Activated T-helper 1 cell treated with anti-CD3 and anti-CD28 coated beads, Interleukin-12 subunit alpha, Interleukin-12 subunit beta, Interleukin-2, Interleukin-4 antibody, amounts not matched to agents 30 ng/mL and 10 ng/mL and 1 ng/mL, durations not matched to agents 14 hours and 24 hours and 36 hours (primary cell): ENCODE measurements at regions of chr12 and their contacts with region 1.

Region 1: DNA sequence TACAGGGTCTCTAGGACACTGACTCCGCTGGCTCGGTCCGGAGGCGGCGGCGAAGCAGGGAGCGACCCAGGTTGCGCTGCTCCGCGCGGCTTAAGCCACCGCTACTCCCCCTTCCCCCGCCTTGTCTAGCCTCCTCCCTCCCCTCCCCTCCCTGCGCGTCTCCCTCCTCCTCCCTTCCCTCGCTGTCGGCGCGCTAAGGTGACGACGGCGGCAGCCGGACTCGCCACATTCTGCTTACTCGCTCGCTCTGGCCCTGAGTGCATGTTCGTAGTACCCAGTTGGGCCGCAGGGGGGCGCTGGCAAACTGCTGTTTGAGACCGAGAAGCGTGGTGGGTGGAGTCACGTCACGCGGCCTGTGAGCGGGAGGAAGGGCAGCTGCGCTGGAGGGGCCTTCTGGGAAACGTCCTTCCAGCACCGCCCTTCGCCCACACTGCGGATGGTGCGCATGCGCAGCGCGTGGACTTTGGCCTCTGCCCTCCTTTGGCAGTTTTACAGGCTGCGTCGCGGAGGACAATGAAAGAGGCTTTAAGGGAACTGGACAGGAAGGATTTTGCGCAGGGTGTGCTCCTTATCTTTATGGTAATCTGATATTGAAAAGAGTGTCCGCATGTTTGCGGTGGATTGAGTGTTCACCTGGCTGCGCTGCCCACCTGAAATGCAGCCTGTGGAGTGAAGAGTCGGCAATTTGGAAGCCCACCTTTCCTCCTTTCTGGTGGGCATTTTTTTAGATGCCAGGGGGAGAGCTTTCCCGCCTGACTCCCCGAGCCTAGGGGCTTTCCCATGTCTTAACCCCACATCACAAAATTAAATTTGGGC is at the start of gene SCAF11:
- DNase-seq: peak; percentile 100
- H3K4me3 Mint-ChIP-seq: peak within 1 kb of the TSS; percentile 95
- H3K27ac Mint-ChIP-seq: peak within 1 kb of the TSS; percentile 98
- H3K4me1 Mint-ChIP-seq: peaks cover 47% of the 10 kb centered on the region
- H3K27me3 Mint-ChIP-seq: peaks cover 3% of the 10 kb centered on the region
- total RNA-seq, gene SCAF11: 125 and 131 TPM in 2 replicates

Region 2: DNA sequence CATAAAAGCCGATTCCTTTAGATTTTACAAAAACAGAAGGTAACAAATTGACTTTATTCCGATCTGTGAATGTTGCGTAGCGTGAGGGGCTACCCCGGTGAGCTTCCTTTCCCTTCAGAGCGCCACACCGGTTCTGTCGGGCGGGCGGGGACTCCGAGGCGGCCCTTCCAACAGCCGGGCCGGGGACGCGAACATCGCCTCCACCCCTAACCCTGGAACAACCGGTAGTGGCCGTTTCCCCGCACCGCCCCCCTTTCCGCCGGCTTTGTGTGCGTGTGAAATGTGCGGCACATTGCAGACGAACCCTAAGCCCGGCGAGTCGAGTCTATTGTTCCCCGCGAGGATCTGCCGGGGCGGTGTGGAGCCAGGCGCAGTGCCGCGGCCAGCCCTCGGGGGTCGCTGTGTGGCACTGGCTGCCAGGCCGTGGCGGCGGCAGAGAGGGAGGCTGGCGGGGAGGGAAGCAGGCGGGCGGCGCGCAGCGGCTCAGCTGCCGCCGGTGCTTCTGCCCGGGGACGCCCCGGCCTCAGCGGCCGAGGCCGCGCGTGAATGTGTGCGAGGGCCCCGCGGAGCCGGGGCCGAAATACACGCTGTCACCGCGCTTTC is 261.9 kb before region 1 on chr12:
- intact Hi-C with region 1: loop called (anchors 1 kb)
- DNase-seq: peak; percentile 96
- H3K4me3 Mint-ChIP-seq: peak overlapping the region; percentile 99
- H3K27ac Mint-ChIP-seq: peak overlapping the region; percentile 100
- H3K4me1 Mint-ChIP-seq: peaks cover 40% of the 10 kb centered on the region
- H3K27me3 Mint-ChIP-seq: no peaks in the 10 kb centered on the region

Region 3: DNA sequence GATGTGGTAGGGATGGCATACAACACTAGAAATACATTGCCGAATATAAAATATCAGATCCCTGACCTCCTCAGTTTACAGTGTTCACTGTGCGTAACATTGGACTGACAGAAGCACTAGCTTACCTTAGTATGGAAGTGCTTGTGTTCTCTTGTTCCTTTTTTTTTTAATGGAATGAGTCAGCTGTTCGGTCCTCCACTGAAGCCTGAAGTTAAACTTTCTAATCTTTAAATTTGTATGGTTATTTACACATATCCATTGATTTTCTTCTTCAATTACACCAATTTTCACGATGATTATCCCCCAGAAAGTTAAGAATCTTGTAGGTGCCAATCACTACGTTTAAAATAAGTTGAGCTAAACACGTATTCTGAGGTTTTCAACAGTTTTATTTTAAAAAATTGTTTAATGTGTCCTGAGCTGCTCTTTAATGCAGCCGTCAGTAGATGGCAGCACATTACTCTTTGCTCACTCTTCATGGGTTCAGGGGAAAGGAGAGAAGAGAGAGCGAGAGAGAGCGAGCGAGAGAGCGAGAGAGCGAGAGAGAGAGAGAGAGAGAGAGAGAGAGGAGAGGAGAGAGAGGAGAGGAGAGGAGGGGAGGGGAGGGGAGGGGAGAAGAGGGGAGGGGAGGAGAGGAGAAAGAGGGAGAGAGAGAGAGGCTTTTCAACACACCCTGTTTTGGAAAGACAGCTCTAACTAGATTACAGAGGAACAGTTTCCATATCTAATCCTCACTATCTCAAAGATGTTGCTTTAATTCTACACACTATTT is 134.4 kb after region 1 on chr12:
- intact Hi-C with region 1: loop called (anchors 2 kb)
- DNase-seq: peak; percentile 42
- H3K4me3 Mint-ChIP-seq: peak overlapping the region; percentile 27
- H3K27ac Mint-ChIP-seq: peak overlapping the region; percentile 75
- H3K4me1 Mint-ChIP-seq: peaks cover 7% of the 10 kb centered on the region
- H3K27me3 Mint-ChIP-seq: peaks cover 36% of the 10 kb centered on the region

Region 4: DNA sequence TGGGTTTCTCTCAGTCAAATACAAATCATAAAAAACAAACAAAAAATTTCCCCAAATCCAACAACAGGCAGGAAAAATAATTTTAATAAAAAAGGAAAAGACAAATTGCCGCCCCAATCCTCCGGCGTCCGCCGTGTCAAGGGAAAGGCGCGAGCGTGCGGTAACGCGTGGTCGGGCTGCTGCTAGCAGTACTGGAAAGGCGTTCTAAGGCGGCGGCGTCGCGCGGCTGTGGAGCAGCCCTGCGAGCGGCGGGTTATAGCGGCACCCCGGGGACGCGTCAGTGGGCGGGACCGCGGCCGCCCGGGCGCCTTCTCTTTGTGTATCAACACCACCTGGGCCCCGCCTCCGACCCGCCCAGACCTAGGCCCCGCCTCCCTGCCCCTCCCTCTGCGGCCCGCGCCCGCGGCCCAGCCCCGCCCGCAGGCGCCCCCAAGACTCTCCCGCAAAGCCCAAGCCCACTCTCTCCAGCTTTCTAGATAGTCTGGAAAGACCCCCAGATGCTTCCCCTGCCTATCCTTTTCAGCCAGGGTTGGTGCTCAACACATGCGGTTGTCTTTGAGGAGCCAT is 382.0 kb after region 1 on chr12 and contains the start of gene SLC38A2:
- intact Hi-C with region 1: loop called (anchors 1 kb)
- DNase-seq: peak; percentile 95
- H3K4me3 Mint-ChIP-seq: peak within 1 kb of the TSS; percentile 92
- H3K27ac Mint-ChIP-seq: peak within 1 kb of the TSS; percentile 99
- H3K4me1 Mint-ChIP-seq: peaks cover 53% of the 10 kb centered on the region
- H3K27me3 Mint-ChIP-seq: peaks cover 3% of the 10 kb centered on the region
- total RNA-seq, gene SLC38A2: 157 and 161 TPM in 2 replicates

Region 5: DNA sequence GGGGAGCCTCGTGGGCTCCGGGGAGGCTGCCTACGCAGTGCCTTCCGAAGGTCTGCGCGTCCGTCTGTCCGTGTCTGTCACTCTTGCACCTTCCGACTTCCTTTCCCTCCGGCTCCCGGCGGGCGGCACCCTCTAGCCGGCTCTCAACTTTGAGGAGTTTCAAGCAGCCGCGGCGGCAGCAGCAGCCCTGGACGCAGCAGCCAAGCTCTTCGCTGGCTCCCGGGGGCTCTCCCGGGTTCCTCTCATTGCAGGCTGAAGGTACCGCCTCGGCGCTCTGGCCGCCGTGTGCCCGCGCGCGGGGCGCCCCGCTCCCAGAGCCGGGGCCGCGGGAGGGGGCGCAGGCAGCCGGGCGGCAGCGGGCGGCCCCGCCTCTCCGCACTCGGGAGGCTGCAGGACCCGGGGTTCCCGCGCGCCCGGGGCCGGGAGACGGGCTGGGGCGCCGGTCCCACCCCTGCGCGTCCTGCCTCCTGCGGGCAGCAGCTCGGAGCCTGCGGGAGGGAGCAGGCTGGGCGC is 1088.8 kb after region 1 on chr12 and contains the starts of genes AMIGO2 and PCED1B:
- intact Hi-C with region 1: loop called (anchors 5 kb)
- DNase-seq: peak; percentile 63
- H3K4me3 Mint-ChIP-seq: peak within 1 kb of the TSS; percentile 97
- H3K27ac Mint-ChIP-seq: peak within 1 kb of the TSS; percentile 97
- H3K4me1 Mint-ChIP-seq: peaks cover 81% of the 10 kb centered on the region
- H3K27me3 Mint-ChIP-seq: no peaks in the 10 kb centered on the region
- total RNA-seq, gene AMIGO2: 11.6 and 12.5 TPM in 2 replicates
- total RNA-seq, gene PCED1B: 50.8 and 55.5 TPM in 2 replicates

Region 6: DNA sequence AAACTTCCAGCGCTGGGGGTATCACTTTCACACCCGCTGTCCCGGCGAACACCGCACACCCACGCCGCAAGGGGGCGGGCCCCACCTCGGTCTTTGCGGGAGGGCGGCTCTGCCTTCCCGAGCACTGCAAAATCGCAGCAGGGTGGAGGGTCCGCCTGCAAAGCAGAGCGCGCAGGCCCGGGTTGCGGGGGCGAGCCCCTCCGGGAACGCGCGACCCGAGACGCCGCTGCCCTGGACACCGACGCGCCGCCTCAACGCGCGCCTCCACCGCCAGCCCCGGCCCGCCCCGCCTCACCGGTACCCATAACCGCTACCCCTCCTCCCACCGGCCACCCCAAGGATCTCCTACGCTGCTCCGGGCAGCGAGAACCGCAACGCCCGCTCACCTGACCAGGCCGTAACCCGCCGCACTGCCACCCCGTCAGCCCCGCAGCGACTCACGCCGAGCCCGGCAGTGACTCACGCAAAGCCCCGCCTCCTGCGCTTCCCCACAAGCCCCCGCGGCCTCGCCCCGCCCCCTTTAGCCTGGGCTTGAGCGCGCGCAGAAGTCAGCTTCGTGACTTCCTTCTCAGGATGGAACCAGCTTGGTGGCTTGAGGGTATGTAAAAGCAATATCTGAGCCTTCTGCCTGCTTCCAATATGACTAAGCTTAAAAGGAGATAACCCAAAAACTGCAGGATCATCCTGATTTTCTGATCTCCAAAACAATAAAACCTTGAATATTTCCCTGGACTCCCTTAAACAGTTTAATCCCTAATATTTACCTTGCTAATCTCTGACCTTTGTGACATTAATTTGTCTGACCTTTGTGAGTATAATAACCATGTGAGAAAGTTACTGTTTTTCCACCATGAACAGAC is 1715.1 kb after region 1 on chr12 and contains the start of gene RPAP3:
- intact Hi-C with region 1: loop called (anchors 5 kb)
- DNase-seq: peak; percentile 97
- H3K4me3 Mint-ChIP-seq: peak within 1 kb of the TSS; percentile 97
- H3K27ac Mint-ChIP-seq: peak within 1 kb of the TSS; percentile 98
- H3K4me1 Mint-ChIP-seq: peaks cover 58% of the 10 kb centered on the region
- H3K27me3 Mint-ChIP-seq: no peaks in the 10 kb centered on the region
- total RNA-seq, gene RPAP3: 61.2 and 64.9 TPM in 2 replicates